Activated CD4-positive, alpha-beta T cell treated with anti-CD3 and anti-CD28 coated beads, Interleukin-2, amount 10 ng/mL, durations not matched to agents 24 days and 14 days (primary cell): ENCODE measurements at regions of chr9 and their contacts with region 1.

Region 1: GRCh38 chr9:114587385-114588202 is at the start of gene ATP6V1G1:
- DNase-seq: peak; percentile 100
- H3K4me3 Mint-ChIP-seq: peak within 1 kb of the TSS; percentile 98
- H3K27ac Mint-ChIP-seq: peak within 1 kb of the TSS; percentile 99
- H3K4me1 Mint-ChIP-seq: peaks cover 43% of the 10 kb centered on the region
- H3K27me3 Mint-ChIP-seq: peaks cover 4% of the 10 kb centered on the region
- total RNA-seq, gene ATP6V1G1: 46.7 and 47.1 TPM in 2 replicates

Region 2: DNA sequence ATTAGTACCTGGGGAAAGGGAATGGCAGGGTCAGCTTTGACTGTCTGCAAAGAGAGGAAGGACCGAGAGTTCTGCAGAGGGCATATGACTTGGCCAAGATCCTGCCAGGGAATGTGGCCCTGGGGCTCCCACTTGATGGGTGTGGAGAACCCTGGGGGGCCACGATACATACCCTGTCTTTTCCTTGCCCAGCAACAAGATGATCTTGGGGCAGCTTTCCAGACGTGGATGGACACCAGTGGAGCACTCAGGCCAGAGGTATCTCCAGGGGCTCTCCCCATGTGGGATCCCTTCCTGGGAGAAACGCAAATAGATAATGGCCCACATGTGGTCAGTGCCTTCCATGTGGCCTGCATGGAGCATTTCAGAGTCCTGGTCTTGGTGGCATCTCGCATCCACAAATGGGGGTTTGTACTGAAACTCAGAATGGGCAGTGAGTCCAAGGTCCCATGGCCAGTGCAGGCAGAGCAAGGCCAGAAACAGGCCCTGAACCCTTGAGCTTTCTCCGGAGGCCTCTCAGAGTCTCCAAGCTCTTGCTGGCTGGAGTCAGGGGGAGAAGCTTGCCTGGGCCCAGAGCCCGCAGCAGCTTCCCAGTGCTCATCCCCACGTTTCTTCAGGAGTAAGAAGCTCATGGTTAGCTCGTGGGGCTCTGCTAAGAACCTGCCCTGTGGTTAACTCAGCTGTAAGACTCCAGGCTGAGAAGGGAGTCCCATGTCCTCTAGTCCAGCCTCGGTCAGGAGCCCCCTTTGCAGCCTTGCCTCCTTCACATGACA is 283.0 kb before region 1 on chr9:
- intact Hi-C with region 1: no loop called
- DNase-seq: no peak
- H3K4me3 Mint-ChIP-seq: no peak overlapping the region
- H3K27ac Mint-ChIP-seq: no peak overlapping the region
- H3K4me1 Mint-ChIP-seq: no peaks in the 10 kb centered on the region
- H3K27me3 Mint-ChIP-seq: no peaks in the 10 kb centered on the region

Region 3: GRCh38 chr9:114397848-114398605 is 189.6 kb before region 1 on chr9:
- intact Hi-C with region 1: loop called (anchors 1 kb)
- DNase-seq: peak; percentile 99
- H3K4me3 Mint-ChIP-seq: peak overlapping the region; percentile 97
- H3K27ac Mint-ChIP-seq: peak overlapping the region; percentile 87
- H3K4me1 Mint-ChIP-seq: peaks cover 33% of the 10 kb centered on the region
- H3K27me3 Mint-ChIP-seq: no peaks in the 10 kb centered on the region

Region 4: GRCh38 chr9:114487607-114488300 is 99.8 kb before region 1 on chr9:
- intact Hi-C with region 1: loop called (anchors 1 kb)
- DNase-seq: peak; percentile 92
- H3K4me3 Mint-ChIP-seq: no peak overlapping the region
- H3K27ac Mint-ChIP-seq: peak overlapping the region; percentile 12
- H3K4me1 Mint-ChIP-seq: peaks cover 32% of the 10 kb centered on the region
- H3K27me3 Mint-ChIP-seq: peaks cover 8% of the 10 kb centered on the region

Region 5: GRCh38 chr9:114611516-114612271 is 24.1 kb after region 1 on chr9:
- intact Hi-C with region 1: loop called (anchors 1 kb)
- DNase-seq: no peak
- H3K4me3 Mint-ChIP-seq: peak overlapping the region; percentile 86
- H3K27ac Mint-ChIP-seq: peak overlapping the region; percentile 89
- H3K4me1 Mint-ChIP-seq: peaks cover 41% of the 10 kb centered on the region
- H3K27me3 Mint-ChIP-seq: no peaks in the 10 kb centered on the region